ENCODE measurements at regions of chr17 and their contacts with region 1.

Region 1: GRCh38 chr17:36601303-36602029 is at the start of gene MRM1:
- DNase-seq: peak; percentile 98
- H3K4me3 ChIP-seq: peak within 1 kb of the TSS; percentile 85 to 90
- H3K27ac ChIP-seq: peak within 1 kb of the TSS; percentile 76 to 78
- H3K4me1 ChIP-seq: peaks cover 0 to 21% of the 10 kb centered on the region in 2 experiments; a peak in 2 of 4 replicates
- H3K27me3 ChIP-seq: no peaks in the 10 kb centered on the region
- CTCF ChIP-seq: peak; percentile 25
- EP300 ChIP-seq: no peak
- RAD21 ChIP-seq: no peak; the same call in 1 of the 2 replicates
- polyA plus RNA-seq, gene MRM1: 9.8 and 10.9 TPM in 2 replicates

Region 2: GRCh38 chr17:36534840-36535668 is 66.4 kb before region 1 on chr17 and contains the starts of genes MYO19 and PIGW:
- CTCF ChIA-PET with region 1: interaction called, 10 read pairs
- POLR2A ChIA-PET with region 1: no interaction called
- DNase-seq: peak; percentile 96
- H3K4me3 ChIP-seq: peak within 1 kb of the TSS; percentile 87 to 88
- H3K27ac ChIP-seq: peak within 1 kb of the TSS; percentile 95 to 96
- H3K4me1 ChIP-seq: peaks cover 0 to 8% of the 10 kb centered on the region in 2 experiments; a peak in 2 of 4 replicates
- H3K27me3 ChIP-seq: no peaks in the 10 kb centered on the region
- CTCF ChIP-seq: 0 out of 2 replicates have a peak, but pooled peaks have one; percentile 20
- EP300 ChIP-seq: 0 out of 4 replicates have a peak, but pooled peaks of 1 of the 2 experiments have one; percentile 6
- RAD21 ChIP-seq: no peak
- polyA plus RNA-seq, gene MYO19: 61.6 and 72.4 TPM in 2 replicates
- polyA plus RNA-seq, gene PIGW: 10.1 and 11.2 TPM in 2 replicates

Region 3: DNA sequence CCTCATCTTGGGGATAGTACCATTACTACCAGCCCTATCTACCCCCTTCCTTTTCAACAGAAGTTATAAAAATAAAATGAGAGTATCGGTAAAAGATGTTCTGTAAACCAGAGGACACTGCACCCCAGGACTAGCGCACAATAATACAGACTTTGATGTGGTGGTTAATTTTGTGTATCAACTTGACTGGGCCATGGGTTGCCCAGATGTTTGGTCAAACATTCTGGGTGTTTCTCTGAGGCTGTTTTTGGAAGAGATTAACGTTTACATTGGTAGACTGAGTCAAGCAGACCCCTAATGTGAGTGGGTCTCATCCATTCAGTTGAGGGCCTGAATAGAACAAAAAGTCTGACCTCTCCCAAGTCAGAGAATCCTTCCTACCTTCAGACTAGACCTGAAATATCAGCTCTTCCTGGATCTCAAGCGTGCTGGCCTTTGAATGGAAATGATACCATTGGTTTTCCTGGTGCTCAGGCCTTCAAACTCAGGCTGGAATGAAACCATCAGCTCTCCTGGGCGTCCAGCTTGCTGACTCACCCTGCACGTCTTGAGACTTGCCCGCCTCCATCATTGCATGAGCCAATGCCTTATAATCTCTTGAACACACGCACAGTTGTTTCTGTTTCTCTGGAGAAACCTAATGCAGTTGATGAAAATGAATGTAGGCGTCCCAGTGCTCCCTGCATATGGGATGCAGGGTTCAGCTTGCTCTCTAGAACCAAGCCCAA is 10.0 kb after region 1 on chr17:
- CTCF ChIA-PET with region 1: interaction called, 45 read pairs
- POLR2A ChIA-PET with region 1: interaction called, 3 read pairs
- DNase-seq: no peak
- H3K4me3 ChIP-seq: no peak overlapping the region
- H3K27ac ChIP-seq: no peak overlapping the region
- H3K4me1 ChIP-seq: no peaks in the 10 kb centered on the region
- H3K27me3 ChIP-seq: no peaks in the 10 kb centered on the region
- CTCF ChIP-seq: no peak
- EP300 ChIP-seq: no peak
- RAD21 ChIP-seq: no peak

Region 4: GRCh38 chr17:37221865-37222264 is 620.4 kb after region 1 on chr17:
- CTCF ChIA-PET with region 1: interaction called, 11 read pairs
- POLR2A ChIA-PET with region 1: interaction called, 3 read pairs
- DNase-seq: no peak
- H3K4me3 ChIP-seq: no peak overlapping the region
- H3K27ac ChIP-seq: no peak overlapping the region
- H3K4me1 ChIP-seq: peaks cover 0 to 9% of the 10 kb centered on the region in 2 experiments; a peak in 2 of 4 replicates
- H3K27me3 ChIP-seq: no peaks in the 10 kb centered on the region
- CTCF ChIP-seq: peak; percentile 32
- EP300 ChIP-seq: no peak
- RAD21 ChIP-seq: no peak

Region 5: DNA sequence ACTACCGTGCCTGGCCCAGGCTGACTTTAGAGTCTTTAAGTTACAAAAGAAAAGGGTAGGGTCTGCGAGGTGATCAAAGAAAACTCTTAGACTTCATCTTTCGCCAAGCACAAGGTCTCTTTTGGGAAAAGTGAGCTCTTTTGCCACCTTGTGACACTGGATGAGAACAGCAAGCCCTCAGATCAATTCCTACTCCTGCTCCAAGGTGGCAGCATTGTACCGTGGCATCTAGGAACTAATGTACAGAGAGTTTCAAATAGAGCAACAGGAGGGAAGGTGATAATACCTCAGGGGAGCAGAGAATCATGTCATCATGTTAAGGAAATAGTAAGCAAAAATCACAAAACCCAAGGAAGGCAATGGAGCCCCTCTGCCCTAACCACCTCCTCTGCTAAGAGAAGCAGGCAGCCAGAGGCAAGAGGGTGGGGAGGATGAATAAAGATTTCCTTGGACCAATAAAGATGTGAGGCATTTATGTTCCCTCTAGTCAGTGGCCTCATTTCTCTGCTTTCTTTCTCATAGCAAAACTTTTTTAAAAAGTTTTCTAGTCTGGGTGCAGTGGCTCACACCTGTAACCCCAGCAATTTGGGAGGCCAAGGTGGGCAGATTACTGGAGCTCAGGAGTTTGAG is 772.2 kb after region 1 on chr17:
- CTCF ChIA-PET with region 1: interaction called, 21 read pairs
- POLR2A ChIA-PET with region 1: no interaction called
- DNase-seq: peak; percentile 74
- H3K4me3 ChIP-seq: peak overlapping the region in 1 of 2 experiments; percentile 28; a peak in 1 of 4 replicates
- H3K27ac ChIP-seq: no peak overlapping the region
- H3K4me1 ChIP-seq: no peaks in the 10 kb centered on the region
- H3K27me3 ChIP-seq: no peaks in the 10 kb centered on the region
- CTCF ChIP-seq: peak; percentile 98
- EP300 ChIP-seq: no peak
- RAD21 ChIP-seq: peak; percentile 99

Measured in SK-N-SH (cell line).